HCT116 (cell line): ENCODE measurements at regions of chr19 and their contacts with region 1.

Region 1: GRCh38 chr19:38374429-38375176 is at the start of gene PSMD8:
- DNase-seq: peak; percentile 99
- ATAC-seq: peak; percentile 98
- H3K4me3 ChIP-seq: peak within 1 kb of the TSS; percentile 97 to 98
- H3K27ac ChIP-seq: peak within 1 kb of the TSS; percentile 92
- H3K4me1 ChIP-seq: peaks cover 11 to 23% of the 10 kb centered on the region in 2 experiments
- H3K27me3 ChIP-seq: no peaks in the 10 kb centered on the region
- CTCF ChIP-seq: no peak
- POLR2A ChIP-seq: peak; percentile 92
- RAD21 ChIP-seq: peak; percentile 2; the same call in 1 of the 2 replicates
- total RNA-seq, gene PSMD8: 195 TPM

Region 2: DNA sequence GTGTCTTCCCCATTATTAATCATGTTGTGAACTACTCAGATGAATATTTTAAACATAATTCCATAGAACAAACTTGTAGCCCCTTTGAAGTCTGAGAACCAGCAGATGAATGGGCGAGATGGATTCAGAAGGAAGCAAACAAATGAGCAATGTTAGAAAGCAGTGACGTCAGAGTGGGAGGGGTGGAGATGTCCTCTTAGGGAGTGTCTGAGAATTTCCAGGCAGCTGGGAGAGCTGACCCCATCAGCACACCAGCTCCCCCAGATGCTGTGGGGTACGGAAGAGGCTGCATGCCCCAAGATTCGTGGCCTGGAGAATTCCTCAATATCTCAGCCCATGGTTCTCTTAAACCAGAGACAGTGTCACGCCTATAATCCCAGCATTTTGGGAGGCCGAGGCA is 219.2 kb before region 1 on chr19:
- CTCF ChIA-PET with region 1: no interaction called
- POLR2A ChIA-PET with region 1: no interaction called
- RAD21 ChIA-PET with region 1: no interaction called
- intact Hi-C with region 1: no loop called
- DNase-seq: no peak
- ATAC-seq: peak; percentile 54; the same call in 1 of the 2 replicates
- H3K4me3 ChIP-seq: no peak overlapping the region
- H3K27ac ChIP-seq: no peak overlapping the region
- H3K4me1 ChIP-seq: no peaks in the 10 kb centered on the region
- H3K27me3 ChIP-seq: no peaks in the 10 kb centered on the region
- CTCF ChIP-seq: no peak
- POLR2A ChIP-seq: no peak
- RAD21 ChIP-seq: no peak

Region 3: GRCh38 chr19:38361633-38362075 is 12.9 kb before region 1 on chr19:
- CTCF ChIA-PET with region 1: no interaction called
- POLR2A ChIA-PET with region 1: interaction called, 12 read pairs
- RAD21 ChIA-PET with region 1: no interaction called
- intact Hi-C with region 1: no loop called
- DNase-seq: peak; percentile 73
- ATAC-seq: peak; percentile 87
- H3K4me3 ChIP-seq: peak overlapping the region; percentile 55 to 68
- H3K27ac ChIP-seq: peak overlapping the region; percentile 74; the same call in 1 of the 2 replicates
- H3K4me1 ChIP-seq: peaks cover 8 to 20% of the 10 kb centered on the region in 2 experiments; a peak in 3 of 4 replicates
- H3K27me3 ChIP-seq: peaks cover 11% of the 10 kb centered on the region; the same call in 1 of the 2 replicates
- CTCF ChIP-seq: 0 out of 6 replicates have a peak, but pooled peaks of 1 of the 3 experiments have one; percentile 16
- POLR2A ChIP-seq: no peak
- RAD21 ChIP-seq: no peak

Region 4: GRCh38 chr19:38387550-38388348 is 13.1 kb after region 1 on chr19 and contains the start of gene GGN:
- CTCF ChIA-PET with region 1: interaction called, 5 read pairs
- POLR2A ChIA-PET with region 1: interaction called, 44 read pairs
- RAD21 ChIA-PET with region 1: interaction called, 3 to 4 read pairs
- intact Hi-C with region 1: no loop called
- DNase-seq: peak; percentile 88
- ATAC-seq: peak; percentile 82
- H3K4me3 ChIP-seq: peak within 1 kb of the TSS; percentile 64 to 68
- H3K27ac ChIP-seq: peak within 1 kb of the TSS; percentile 63
- H3K4me1 ChIP-seq: peaks cover 11 to 47% of the 10 kb centered on the region in 2 experiments
- H3K27me3 ChIP-seq: no peaks in the 10 kb centered on the region
- CTCF ChIP-seq: no peak
- POLR2A ChIP-seq: no peak
- RAD21 ChIP-seq: no peak
- total RNA-seq, gene GGN: 0.47 TPM

Region 5: DNA sequence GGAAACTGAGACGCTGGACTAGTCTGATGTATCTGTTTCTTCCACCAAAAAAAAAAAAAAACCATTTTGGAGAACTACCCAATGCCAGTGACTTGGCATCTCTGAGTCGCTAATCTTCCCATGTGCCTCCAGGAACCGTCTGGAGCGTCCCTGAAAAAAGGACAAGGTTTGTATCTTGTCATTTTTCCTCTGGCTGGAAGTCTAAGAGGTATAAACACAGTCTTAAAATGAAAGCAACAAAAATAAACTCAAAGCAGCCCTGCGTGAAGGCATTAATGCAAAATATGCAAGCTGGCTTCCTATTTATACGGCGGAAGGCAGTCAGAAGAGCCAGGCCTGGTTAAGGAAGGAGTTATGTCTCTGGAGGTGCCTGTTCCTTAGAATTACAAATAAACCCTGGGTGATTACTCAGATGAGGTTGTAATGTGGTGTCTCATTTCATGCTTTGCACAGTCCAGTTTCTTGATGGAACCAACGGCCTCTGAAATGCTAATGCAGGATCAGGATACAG is 293.1 kb after region 1 on chr19:
- CTCF ChIA-PET with region 1: no interaction called
- POLR2A ChIA-PET with region 1: no interaction called
- RAD21 ChIA-PET with region 1: no interaction called
- intact Hi-C with region 1: no loop called
- DNase-seq: no peak
- ATAC-seq: no peak
- H3K4me3 ChIP-seq: no peak overlapping the region
- H3K27ac ChIP-seq: peak overlapping the region; percentile 5; the same call in 1 of the 2 replicates
- H3K4me1 ChIP-seq: peaks cover 70 to 91% of the 10 kb centered on the region in 2 experiments
- H3K27me3 ChIP-seq: no peaks in the 10 kb centered on the region
- CTCF ChIP-seq: no peak
- POLR2A ChIP-seq: no peak
- RAD21 ChIP-seq: no peak